Endothelial cell of umbilical vein (primary cell): ENCODE measurements at regions of chr15 and their contacts with region 1.

Region 1: GRCh38 chr15:55267401-55268175 is 22.0 kb downstream of the RAB27A start:
- DNase-seq: peak; percentile 55
- H3K4me3 ChIP-seq: peak overlapping the region in 2 of 3 experiments; percentile 6 to 19
- H3K27ac ChIP-seq: peak overlapping the region; percentile 34
- H3K4me1 ChIP-seq: peaks cover 15% of the 10 kb centered on the region
- H3K27me3 ChIP-seq: no peaks in the 10 kb centered on the region
- CTCF ChIP-seq: no peak
- POLR2A ChIP-seq: no peak

Region 2: DNA sequence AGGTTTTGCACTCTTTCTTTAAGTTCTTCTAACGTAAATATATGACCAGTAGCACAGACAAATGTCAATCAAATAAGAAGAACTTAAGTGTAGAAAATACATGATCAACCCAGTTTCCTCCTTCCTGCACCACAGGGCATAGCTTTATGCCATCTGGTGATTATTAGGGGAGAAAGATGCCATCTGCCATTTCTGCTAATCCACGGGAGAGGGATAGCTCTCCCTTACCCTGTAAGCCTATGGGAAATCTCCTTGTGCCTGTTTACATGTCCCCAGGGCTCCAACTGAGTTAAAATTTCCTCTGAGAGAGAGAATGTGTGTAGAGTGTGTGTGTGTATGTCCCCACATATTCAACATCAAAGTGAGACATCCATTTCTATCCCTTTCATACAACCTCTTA is 206.8 kb before region 1 on chr15:
- CTCF ChIA-PET with region 1: no interaction called
- POLR2A ChIA-PET with region 1: no interaction called
- dilution Hi-C with region 1: no loop called
- intact Hi-C with region 1: no loop called
- DNase-seq: no peak
- H3K4me3 ChIP-seq: no peak overlapping the region
- H3K27ac ChIP-seq: no peak overlapping the region
- H3K4me1 ChIP-seq: no peaks in the 10 kb centered on the region
- H3K27me3 ChIP-seq: no peaks in the 10 kb centered on the region
- CTCF ChIP-seq: no peak
- POLR2A ChIP-seq: no peak

Region 3: GRCh38 chr15:55279746-55280351 is 12.3 kb after region 1 on chr15:
- CTCF ChIA-PET with region 1: no interaction called
- POLR2A ChIA-PET with region 1: no interaction called
- dilution Hi-C with region 1: no loop called
- intact Hi-C with region 1: loop called (anchors 1 kb)
- DNase-seq: peak; percentile 84
- H3K4me3 ChIP-seq: no peak overlapping the region
- H3K27ac ChIP-seq: peak overlapping the region; percentile 86
- H3K4me1 ChIP-seq: peaks cover 39% of the 10 kb centered on the region
- H3K27me3 ChIP-seq: no peaks in the 10 kb centered on the region
- CTCF ChIP-seq: no peak
- POLR2A ChIP-seq: no peak